ENCODE measurements at regions of chr14 and their contacts with region 1.

Region 1: GRCh38 chr14:76876076-76876475 is 49.9 kb downstream of the LRRC74A start:
- DNase-seq: peak in 1 of 2 donors; percentile 74
- ATAC-seq: peak; percentile 85 to 94 (median 92)
- H3K4me3 ChIP-seq: no peak overlapping the region
- H3K27ac ChIP-seq: no peak overlapping the region
- H3K4me1 ChIP-seq: no peaks in the 10 kb centered on the region
- H3K27me3 ChIP-seq: no peaks in the 10 kb centered on the region
- CTCF ChIP-seq: peak; percentile 96

Region 2: DNA sequence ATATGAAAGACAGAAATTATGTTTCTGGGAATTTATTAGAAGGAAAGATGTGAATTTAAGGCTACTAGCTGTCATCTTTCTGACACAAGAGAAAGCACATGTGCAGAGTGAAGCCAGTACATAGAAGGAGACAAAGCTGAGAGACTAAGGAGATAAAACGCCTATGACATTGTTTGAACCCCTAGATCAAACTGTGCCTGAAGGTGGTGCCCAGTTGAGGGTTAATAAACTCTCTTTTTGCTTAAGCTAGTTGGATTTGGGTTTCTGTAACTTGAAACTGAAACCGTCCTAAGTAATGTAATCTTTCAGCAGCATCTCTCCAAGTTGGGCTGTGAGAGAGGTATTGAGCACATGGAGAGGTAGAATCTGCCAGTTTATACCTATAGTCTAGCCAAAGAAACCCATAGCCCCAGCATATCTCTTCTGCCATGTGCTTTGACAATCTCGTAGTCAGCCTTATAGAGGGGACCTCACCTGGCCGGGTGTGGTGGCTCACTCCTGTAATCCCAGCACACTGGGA is 34.4 kb after region 1 on chr14:
- intact Hi-C with region 1: loop called (anchors 2 to 5 kb)
- DNase-seq: no peak
- ATAC-seq: no peak
- H3K4me3 ChIP-seq: no peak overlapping the region
- H3K27ac ChIP-seq: no peak overlapping the region
- H3K4me1 ChIP-seq: peaks cover 4% of the 10 kb centered on the region
- H3K27me3 ChIP-seq: no peaks in the 10 kb centered on the region
- CTCF ChIP-seq: no peak

Region 3: GRCh38 chr14:77067632-77068514 is 191.8 kb after region 1 on chr14:
- intact Hi-C with region 1: loop called (anchors 1 to 2 kb)
- DNase-seq: peak; percentile 63 to 86
- ATAC-seq: peak; percentile 84 to 91 (median 88)
- H3K4me3 ChIP-seq: no peak overlapping the region
- H3K27ac ChIP-seq: no peak overlapping the region
- H3K4me1 ChIP-seq: peaks cover 24% of the 10 kb centered on the region
- H3K27me3 ChIP-seq: no peaks in the 10 kb centered on the region
- CTCF ChIP-seq: peak; percentile 93

Region 4: DNA sequence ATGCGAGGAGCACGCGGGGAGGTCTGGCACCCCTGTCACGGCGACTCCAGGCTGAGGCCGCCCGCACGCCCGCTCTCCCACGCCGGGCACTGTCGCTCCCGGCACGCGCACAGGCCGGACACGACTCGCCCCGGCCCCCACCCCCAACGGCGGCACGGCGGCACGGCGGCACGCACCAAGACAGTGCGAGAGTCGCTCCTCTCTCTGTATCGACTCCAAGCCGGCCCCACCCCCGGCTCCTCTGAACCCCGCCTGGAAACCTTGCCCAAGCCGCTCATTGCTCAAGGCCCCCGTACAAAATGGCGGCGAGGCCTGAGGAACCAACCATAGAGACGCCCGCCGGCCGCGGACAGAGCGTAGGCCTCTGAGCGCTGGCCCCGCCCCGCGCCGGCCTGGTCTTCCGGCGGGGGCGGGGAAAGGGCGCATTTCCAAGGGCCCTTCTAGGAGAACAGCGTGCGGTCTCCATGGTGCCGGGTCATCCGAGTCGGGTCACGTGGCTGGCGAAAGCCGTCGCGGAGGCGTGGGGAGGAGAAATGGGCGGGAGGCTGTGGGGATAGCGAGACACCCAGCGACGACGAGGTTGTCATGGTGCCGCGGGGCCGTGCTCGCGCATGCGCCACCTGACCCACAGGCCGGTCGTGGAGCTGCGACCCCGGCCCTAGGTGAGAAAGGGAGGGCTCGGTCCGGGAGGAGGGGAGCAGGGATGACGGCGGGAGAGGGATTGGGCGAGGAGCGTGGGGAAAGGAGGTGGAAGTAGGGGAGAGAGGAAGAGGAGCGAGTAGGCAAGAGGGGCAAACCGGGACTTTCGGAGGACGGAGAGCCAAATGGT is 221.8 kb after region 1 on chr14 and contains the start of gene CIPC:
- intact Hi-C with region 1: loop called in 1 of 2 experiments (anchors 2 kb)
- DNase-seq: peak; percentile 99 to 100
- ATAC-seq: peak; percentile 90 to 95 (median 90)
- H3K4me3 ChIP-seq: peak within 1 kb of the TSS; percentile 66
- H3K27ac ChIP-seq: peak within 1 kb of the TSS; percentile 98
- H3K4me1 ChIP-seq: peaks cover 39% of the 10 kb centered on the region
- H3K27me3 ChIP-seq: no peaks in the 10 kb centered on the region
- CTCF ChIP-seq: no peak
- total RNA-seq, gene CIPC: 83.8 to 133 (median 112) TPM

Region 5: DNA sequence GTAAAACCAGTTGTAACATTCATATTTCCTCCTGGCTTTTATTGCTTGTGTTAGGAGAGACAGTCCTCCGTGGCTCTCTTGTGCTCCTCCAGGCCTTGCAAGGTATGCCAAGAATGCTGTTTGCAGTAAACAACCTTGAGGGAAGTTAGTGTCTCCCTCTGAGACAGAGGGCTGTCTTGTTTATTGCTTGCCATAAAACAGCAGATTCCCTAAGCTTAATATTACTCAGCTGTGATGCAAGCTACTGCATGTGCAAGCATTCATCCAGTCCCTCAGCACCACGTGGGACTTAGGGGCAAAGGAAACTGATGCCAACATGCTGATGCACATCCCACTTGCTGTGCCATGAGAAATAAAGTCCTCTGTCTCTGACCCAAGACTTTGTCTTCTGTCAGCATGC is 438.0 kb after region 1 on chr14:
- intact Hi-C with region 1: loop called in 1 of 2 experiments (anchors 10 kb)
- DNase-seq: no peak
- ATAC-seq: peak; percentile 53 to 66 (median 62)
- H3K4me3 ChIP-seq: peak overlapping the region; percentile 1
- H3K27ac ChIP-seq: peak overlapping the region; percentile 85
- H3K4me1 ChIP-seq: peaks cover 81% of the 10 kb centered on the region
- H3K27me3 ChIP-seq: no peaks in the 10 kb centered on the region
- CTCF ChIP-seq: no peak

Region 6: DNA sequence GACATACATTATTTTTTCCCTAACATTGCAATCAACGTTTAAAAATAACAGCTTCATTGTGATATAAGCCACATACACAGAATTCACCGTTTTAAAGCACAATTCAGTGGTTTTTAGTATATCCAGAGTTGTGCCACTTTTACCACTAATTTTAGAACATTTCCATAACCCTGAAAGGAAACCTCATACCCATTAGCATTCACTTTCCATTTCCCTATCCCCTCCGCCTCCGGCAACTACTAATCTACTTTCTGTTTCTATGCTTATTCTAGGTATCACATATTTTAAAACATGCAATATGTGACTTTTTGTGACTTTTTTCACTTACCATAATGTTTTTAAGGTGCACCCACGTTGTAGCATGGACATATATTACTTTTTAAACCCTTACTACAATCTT is 678.1 kb after region 1 on chr14:
- intact Hi-C with region 1: loop called in 1 of 2 experiments (anchors 10 kb)
- DNase-seq: no peak
- ATAC-seq: no peak
- H3K4me3 ChIP-seq: no peak overlapping the region
- H3K27ac ChIP-seq: no peak overlapping the region
- H3K4me1 ChIP-seq: no peaks in the 10 kb centered on the region
- H3K27me3 ChIP-seq: no peaks in the 10 kb centered on the region
- CTCF ChIP-seq: no peak

Measured in psoas muscle (tissue), 8 donors.